A673 (cell line): ENCODE measurements at regions of chr16 and their contacts with region 1.

Region 1: DNA sequence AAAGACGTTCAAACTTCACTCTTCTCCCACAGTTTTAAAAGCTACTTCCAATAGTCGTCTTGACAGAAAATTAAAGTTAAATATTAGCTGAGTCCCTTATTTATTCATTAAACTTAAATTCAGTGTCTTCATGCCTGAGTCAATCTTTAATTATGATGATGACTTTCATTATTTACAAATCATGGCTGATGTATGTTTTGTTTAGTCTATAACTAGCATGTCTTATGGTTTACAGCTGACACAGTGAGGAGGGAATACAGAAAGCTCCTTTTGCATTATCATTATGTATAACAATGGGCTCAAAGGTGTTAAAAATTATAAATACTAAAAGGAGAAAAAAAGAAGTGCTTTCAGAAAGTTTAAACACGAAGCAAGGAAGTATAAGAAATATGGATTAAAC is 1333.1 kb downstream of the CDH8 start:
- DNase-seq: no peak
- H3K4me3 ChIP-seq: no peak overlapping the region
- H3K27ac ChIP-seq: no peak overlapping the region
- H3K4me1 ChIP-seq: no peaks in the 10 kb centered on the region
- H3K27me3 ChIP-seq: no peaks in the 10 kb centered on the region
- CTCF ChIP-seq: no peak

Region 2: GRCh38 chr16:59108374-59108773 is 1594.7 kb before region 1 on chr16:
- CTCF ChIA-PET with region 1: no interaction called
- POLR2A ChIA-PET with region 1: interaction called, 11 read pairs
- intact Hi-C with region 1: no loop called
- DNase-seq: no peak
- H3K4me3 ChIP-seq: no peak overlapping the region
- H3K27ac ChIP-seq: no peak overlapping the region
- H3K4me1 ChIP-seq: no peaks in the 10 kb centered on the region
- H3K27me3 ChIP-seq: no peaks in the 10 kb centered on the region
- CTCF ChIP-seq: no peak

Region 3: GRCh38 chr16:60681043-60681442 is 22.1 kb before region 1 on chr16:
- CTCF ChIA-PET with region 1: no interaction called
- POLR2A ChIA-PET with region 1: no interaction called
- intact Hi-C with region 1: no loop called
- DNase-seq: no peak
- H3K4me3 ChIP-seq: no peak overlapping the region
- H3K27ac ChIP-seq: no peak overlapping the region
- H3K4me1 ChIP-seq: no peaks in the 10 kb centered on the region
- H3K27me3 ChIP-seq: no peaks in the 10 kb centered on the region
- CTCF ChIP-seq: no peak